ENCODE measurements at regions of chr1 and their contacts with region 1.

Region 1: GRCh38 chr1:153990468-153991150 is at the start of gene RPS27:
- DNase-seq: peak; percentile 59 to 97 (median 92)
- ATAC-seq: peak; percentile 82 to 86
- H3K4me3 Mint-ChIP-seq: peak within 1 kb of the TSS; percentile 90 to 100 (median 98)
- H3K27ac Mint-ChIP-seq: peak within 1 kb of the TSS; percentile 99 to 100 (median 100)
- H3K4me1 Mint-ChIP-seq: peaks cover 35 to 63% (median 58%) of the 10 kb centered on the region in 4 donors
- H3K27me3 Mint-ChIP-seq: peaks cover 0 to 2% (median 0%) of the 10 kb centered on the region in 5 donors
- polyA plus RNA-seq, gene RPS27: 23,491 to 26,660 (median 26,449) TPM

Region 2: GRCh38 chr1:153775458-153776327 is 214.9 kb before region 1 on chr1:
- POLR2A ChIA-PET with region 1: interaction called, 40 read pairs
- DNase-seq: peak; percentile 44 to 83 (median 61)
- ATAC-seq: peak; percentile 79 to 82
- H3K4me3 Mint-ChIP-seq: peak overlapping the region; percentile 79 to 90 (median 86)
- H3K27ac Mint-ChIP-seq: peak overlapping the region in 9 of 10 donors; percentile 43 to 91 (median 78)
- H3K4me1 Mint-ChIP-seq: peaks cover 16 to 40% (median 35%) of the 10 kb centered on the region in 4 donors
- H3K27me3 Mint-ChIP-seq: no peaks in the 10 kb centered on the region

Region 3: DNA sequence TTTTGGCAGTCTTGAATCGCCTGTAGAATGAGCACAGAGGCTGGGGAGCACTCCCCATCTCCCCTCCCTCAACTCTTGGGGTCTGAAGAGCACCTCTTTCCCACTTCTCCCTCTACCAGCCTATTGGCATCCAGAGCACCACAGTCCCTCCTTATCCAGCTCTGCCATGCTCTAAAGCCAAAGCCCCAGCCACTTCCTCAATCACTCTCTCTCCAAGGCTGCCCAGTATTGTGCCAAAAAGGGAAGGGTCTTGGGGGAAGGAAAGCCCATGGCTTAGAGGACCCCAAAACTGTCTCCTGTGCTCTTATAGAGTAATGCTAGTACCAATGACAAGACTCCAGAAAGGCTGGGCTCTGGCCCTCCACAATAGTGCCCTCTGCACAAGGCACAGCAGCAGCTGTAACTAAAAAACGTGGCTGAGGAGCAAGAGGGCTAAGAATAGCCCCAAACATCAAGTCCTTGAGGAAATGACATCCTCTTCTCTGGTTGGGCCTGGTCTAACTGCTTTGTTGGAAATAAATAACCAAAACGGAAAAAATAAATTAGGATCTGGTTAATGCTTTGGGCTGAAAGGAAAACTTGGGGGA is 187.0 kb before region 1 on chr1:
- POLR2A ChIA-PET with region 1: interaction called, 18 read pairs
- DNase-seq: no peak
- ATAC-seq: no peak
- H3K4me3 Mint-ChIP-seq: no peak overlapping the region
- H3K27ac Mint-ChIP-seq: peak overlapping the region; percentile 22 to 91 (median 85)
- H3K4me1 Mint-ChIP-seq: peaks cover 30 to 56% (median 45%) of the 10 kb centered on the region in 4 donors
- H3K27me3 Mint-ChIP-seq: no peaks in the 10 kb centered on the region

Region 4: DNA sequence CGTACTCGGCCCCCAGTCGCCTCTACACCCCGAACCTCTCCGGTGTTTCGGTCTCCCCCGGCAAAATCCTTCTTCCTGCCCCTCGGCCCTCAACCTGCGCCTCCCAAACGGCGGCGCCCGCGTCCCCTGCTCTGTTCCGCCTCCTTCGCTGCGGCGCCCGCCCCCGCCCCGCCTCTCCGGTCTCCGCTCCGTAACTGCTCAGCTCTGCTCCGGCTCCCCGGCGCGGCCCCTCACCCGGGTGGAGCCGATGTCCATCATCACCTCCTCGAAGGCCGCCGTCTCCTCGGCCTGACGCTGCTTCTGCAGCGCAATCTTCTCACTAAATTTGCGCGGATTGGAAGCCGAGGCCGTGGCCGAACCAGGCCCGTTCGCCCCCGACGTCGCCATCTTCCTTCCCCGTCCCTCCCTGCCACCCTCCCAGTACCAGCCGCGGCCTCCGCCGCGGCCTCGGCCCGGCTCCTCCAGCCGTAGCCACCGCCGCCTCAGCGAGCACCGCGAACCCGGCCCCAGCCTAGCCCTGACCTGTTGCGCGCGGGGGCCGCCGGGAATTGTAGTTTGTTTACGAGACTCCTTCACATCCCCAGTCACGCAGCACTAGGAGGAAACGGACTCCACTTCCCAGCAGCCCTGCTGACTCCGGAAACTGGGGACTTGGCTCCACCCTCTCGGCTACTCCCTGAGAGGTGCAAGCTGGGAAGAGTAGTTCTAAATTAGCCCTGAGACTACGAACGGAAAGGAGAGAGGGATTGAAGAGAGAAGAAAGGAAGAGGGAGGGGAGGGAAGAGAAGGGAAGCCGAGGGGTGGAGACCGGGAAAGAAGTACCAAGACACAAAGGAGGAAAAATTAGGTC is 32.3 kb before region 1 on chr1 and contains the start of gene CRTC2:
- POLR2A ChIA-PET with region 1: interaction called, 61 read pairs
- DNase-seq: peak; percentile 91 to 98 (median 96)
- ATAC-seq: peak; percentile 84 to 88
- H3K4me3 Mint-ChIP-seq: peak within 1 kb of the TSS; percentile 86 to 100 (median 98)
- H3K27ac Mint-ChIP-seq: peak within 1 kb of the TSS; percentile 85 to 98 (median 96)
- H3K4me1 Mint-ChIP-seq: peaks cover 37 to 79% (median 63%) of the 10 kb centered on the region in 4 donors
- H3K27me3 Mint-ChIP-seq: no peaks in the 10 kb centered on the region
- polyA plus RNA-seq, gene CRTC2: 21.4 to 49.6 (median 27.1) TPM

Region 5: DNA sequence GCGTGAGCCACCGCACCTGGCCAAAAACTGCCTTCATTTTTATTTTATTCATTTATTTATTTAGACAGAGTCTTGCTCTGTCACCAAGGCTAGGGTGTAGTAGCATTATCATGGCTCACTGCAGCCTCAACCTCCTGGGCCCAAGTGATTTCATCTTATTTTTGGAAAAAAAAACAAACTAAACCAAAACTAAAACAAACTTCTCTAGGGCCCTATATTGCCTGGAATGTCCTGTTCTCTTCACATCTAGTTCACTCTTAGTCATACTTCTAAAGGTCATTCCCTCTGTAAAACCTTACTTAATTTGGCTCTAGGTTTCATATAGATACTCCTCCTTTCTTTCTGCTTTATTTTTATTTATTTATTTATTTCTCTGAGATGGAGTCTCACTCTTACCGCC is 15.5 kb after region 1 on chr1:
- POLR2A ChIA-PET with region 1: interaction called, 23 read pairs
- DNase-seq: no peak
- ATAC-seq: no peak
- H3K4me3 Mint-ChIP-seq: no peak overlapping the region
- H3K27ac Mint-ChIP-seq: no peak overlapping the region
- H3K4me1 Mint-ChIP-seq: peaks cover 0 to 1% (median 0%) of the 10 kb centered on the region in 4 donors
- H3K27me3 Mint-ChIP-seq: no peaks in the 10 kb centered on the region

Region 6: GRCh38 chr1:154220071-154220969 is 229.7 kb after region 1 on chr1 and contains the start of gene UBAP2L:
- POLR2A ChIA-PET with region 1: interaction called, 27 read pairs
- DNase-seq: peak; percentile 93 to 99 (median 99)
- ATAC-seq: peak; percentile 87
- H3K4me3 Mint-ChIP-seq: peak within 1 kb of the TSS; percentile 83 to 99 (median 96)
- H3K27ac Mint-ChIP-seq: peak within 1 kb of the TSS; percentile 99 to 100 (median 100)
- H3K4me1 Mint-ChIP-seq: peaks cover 44 to 74% (median 74%) of the 10 kb centered on the region in 4 donors
- H3K27me3 Mint-ChIP-seq: peaks cover 0 to 2% (median 0%) of the 10 kb centered on the region in 5 donors
- polyA plus RNA-seq, gene UBAP2L: 42.0 to 70.5 (median 54.8) TPM

Measured in naive thymus-derived CD8-positive, alpha-beta T cell (primary cell).